PC-3 (cell line): ENCODE measurements at regions of chr22 and their contacts with region 1.

Region 1: DNA sequence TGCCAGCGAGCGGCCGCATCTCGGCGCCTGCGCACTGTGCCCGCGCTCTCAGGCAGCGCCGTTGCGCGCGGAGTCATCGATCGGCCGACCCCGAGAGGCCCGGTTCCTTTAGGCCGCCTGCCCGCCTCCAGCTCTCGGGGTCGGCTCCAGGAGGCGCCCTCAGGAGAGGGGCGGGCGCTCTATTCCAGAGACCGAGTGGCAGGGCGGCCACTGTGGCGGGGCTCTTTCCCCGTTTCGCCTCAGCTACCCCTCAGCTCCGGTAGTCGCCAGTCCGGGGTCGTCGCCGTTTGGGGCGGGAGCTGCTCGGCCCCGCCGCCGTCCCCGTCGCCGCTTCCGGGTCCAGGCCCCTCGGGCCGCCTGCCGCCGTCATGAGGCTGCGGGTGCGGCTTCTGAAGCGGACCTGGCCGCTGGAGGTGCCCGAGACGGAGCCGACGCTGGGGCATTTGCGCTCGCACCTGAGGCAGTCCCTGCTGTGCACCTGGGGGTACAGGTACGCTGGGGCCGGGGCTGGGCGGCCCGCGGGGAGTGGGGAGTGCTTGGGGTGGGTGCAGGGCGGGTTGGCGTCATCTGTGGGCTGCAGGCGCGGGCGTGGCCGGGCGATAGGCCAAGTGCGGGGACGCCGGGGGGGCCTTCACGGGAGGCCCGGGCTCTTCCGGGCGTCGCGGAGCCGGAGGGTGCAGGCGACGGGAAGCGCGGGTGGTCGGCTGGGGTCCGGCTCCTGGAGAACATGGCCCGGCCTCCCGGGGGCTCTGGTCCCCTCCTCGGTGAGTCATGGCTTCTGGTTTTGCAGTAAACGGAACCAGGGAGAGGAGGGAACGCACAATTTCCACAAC is at the start of gene FBXO7:
- DNase-seq: peak; percentile 78
- ATAC-seq: peak; percentile 61
- H3K4me3 ChIP-seq: peak within 1 kb of the TSS; percentile 99
- H3K27ac ChIP-seq: peak within 1 kb of the TSS; percentile 83
- H3K4me1 ChIP-seq: peaks cover 22% of the 10 kb centered on the region
- H3K27me3 ChIP-seq: no peaks in the 10 kb centered on the region
- CTCF ChIP-seq: no peak; the same call in 1 of the 2 replicates
- total RNA-seq, gene FBXO7: 43.6 and 44.2 TPM in 2 replicates

Region 2: DNA sequence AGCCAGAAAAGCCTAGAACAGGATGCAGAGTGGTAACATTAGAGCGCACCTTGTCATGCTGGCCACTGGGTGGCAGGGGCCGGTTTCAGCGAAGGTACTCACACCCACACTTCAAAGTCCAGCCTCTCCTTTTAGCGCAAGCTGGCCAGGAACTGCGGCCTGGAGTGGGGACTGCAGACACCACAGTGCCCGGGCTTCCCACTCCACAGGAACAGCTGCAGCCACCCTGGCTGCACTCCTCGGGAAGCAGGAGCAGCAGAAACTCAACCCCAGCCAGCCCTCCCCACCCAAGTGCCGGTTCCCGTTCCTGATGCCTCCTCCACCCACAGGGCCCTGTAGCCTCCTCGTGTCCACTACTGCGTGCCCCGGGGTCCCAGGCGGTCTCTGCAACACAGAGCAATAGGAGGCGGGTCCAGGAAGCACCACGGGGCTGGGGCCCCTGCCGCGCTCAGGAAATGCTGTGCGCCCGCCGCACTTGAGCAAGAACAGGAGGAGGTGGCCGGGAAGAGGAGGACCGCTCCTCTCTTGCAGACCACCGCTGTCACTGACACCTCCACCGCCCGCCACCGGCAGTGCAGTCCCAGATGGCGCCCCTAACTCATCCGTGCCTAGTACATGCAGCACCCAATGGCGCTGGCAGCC is 272.2 kb before region 1 on chr22:
- CTCF ChIA-PET with region 1: no interaction called
- POLR2A ChIA-PET with region 1: no interaction called
- intact Hi-C with region 1: loop called (anchors 10 kb)
- DNase-seq: peak; percentile 58
- ATAC-seq: peak; percentile 91
- H3K4me3 ChIP-seq: no peak overlapping the region
- H3K27ac ChIP-seq: no peak overlapping the region
- H3K4me1 ChIP-seq: no peaks in the 10 kb centered on the region
- H3K27me3 ChIP-seq: no peaks in the 10 kb centered on the region
- CTCF ChIP-seq: peak; percentile 58

Region 3: DNA sequence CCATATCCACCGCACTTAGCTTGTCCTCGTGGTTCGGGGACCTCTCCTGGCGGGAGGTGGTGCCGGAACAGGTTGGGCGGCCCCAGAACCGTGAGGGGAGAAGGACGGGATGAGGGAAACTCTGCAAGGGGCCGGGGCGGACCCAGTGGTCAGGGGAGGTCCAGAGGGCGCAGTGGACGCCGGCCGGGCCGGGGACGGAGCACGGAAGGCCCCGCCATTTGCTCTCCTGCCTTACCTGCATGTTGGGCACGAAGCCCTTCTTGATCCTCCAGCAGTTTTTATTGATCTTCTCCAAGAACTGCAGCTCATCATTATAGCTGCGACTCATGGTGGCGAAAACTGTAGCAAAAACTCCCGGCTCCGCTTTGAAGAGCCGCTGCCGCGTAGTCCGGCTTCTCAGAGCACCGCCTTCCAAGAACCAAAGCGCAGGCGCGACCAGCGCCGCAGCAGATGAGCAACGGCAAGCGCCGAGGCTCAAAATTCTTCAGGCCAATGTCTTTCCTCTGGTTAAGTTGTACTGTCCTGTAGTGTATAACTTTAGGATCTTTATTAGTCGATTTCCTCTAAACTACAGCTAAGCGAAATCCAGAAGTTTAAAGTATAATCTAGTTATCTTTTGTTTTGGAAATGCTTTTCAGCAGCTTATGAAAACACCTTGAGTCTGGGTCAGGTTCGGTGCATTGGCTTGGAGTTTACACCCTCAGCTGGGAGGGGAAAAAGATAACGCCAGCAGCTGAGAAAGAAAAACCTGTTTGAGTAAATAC is 62.8 kb before region 1 on chr22 and contains the start of gene RTCB:
- CTCF ChIA-PET with region 1: no interaction called
- POLR2A ChIA-PET with region 1: no interaction called
- intact Hi-C with region 1: loop called (anchors 1 kb)
- DNase-seq: peak; percentile 89
- ATAC-seq: peak; percentile 74
- H3K4me3 ChIP-seq: peak within 1 kb of the TSS; percentile 90
- H3K27ac ChIP-seq: peak within 1 kb of the TSS; percentile 78
- H3K4me1 ChIP-seq: peaks cover 16% of the 10 kb centered on the region
- H3K27me3 ChIP-seq: peaks cover 8% of the 10 kb centered on the region; the same call in 1 of the 2 replicates
- CTCF ChIP-seq: no peak
- total RNA-seq, gene RTCB: 136 and 146 TPM in 2 replicates

Region 4: DNA sequence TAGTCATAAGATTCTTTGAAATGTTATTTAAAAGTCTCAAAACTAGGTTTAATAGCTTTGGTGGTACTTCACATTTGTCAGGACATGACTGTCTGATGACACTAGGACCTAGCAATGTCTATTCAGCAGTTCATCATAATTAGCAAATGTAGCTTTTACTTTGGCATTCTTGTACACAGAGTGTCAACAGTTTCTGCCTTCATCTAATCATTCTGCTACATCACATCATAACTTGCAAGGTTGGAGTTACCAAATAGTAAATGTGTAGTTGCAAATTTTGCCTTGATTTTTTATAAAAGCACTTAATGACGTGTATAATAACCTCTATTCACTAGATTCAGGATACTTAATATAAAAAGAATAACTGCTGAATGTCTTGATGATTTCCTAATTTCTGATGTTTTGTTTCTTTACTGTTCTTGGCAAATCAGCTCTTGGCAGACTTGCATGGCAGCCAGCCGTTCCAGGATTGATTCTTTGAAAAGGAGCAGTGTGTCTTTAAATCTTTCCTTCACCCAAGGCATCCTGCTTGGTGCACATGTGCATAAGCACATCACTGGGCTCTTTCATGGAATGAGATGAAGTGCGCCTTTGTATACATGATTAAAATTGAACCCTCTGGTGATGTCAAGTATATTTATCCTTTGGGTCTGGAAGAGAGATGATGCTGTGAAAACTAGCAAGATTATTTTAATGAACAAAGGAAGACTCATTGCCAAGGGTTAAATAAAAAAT is 12.0 kb after region 1 on chr22:
- CTCF ChIA-PET with region 1: no interaction called
- POLR2A ChIA-PET with region 1: no interaction called
- intact Hi-C with region 1: no loop called
- DNase-seq: no peak
- ATAC-seq: no peak
- H3K4me3 ChIP-seq: no peak overlapping the region
- H3K27ac ChIP-seq: no peak overlapping the region
- H3K4me1 ChIP-seq: peaks cover 15% of the 10 kb centered on the region; the same call in 1 of the 2 replicates
- H3K27me3 ChIP-seq: no peaks in the 10 kb centered on the region
- CTCF ChIP-seq: no peak